ENCODE measurements at regions of chr3 and their contacts with region 1.

Region 1: DNA sequence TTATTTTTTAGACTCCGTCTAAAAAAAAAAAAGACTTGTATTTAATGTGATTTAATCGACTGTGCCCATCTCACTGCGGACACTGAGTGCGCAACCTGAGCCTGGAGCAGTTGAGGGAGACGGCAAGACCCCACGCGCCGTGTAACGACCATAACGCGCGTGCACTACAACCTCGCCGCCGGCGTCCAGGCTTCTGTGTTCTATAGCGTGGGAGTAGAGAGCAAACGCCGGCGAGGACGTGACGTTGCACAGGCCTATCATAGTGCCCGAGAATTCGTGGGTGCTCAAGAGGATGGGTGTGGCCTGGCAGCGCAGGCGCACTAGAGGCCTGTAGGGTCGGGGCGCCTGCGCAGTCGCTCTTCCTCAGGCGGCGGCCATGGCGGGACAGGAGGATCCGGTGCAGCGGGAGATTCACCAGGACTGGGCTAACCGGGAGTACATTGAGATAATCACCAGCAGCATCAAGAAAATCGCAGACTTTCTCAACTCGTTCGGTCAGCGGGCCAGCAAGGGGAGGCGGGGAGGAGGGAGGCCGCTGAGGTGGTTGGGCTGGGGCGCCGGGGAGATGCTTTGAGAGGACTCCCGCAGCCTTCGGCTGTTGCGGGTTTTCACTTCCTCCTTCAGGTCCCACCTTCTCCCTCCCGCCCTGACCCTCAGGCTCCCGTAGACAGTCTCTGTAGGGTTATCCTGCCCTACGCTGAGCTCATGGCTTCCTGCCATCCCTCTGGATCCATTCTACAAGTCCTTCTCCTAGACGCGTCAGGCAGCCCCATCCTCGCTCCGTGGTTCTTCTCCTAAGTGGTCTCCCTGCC is at the start of gene BRK1:
- DNase-seq: peak; percentile 98
- ATAC-seq: peak; percentile 98
- H3K4me3 Mint-ChIP-seq: peak within 1 kb of the TSS; percentile 96
- H3K27ac Mint-ChIP-seq: peak within 1 kb of the TSS; percentile 92
- H3K4me1 Mint-ChIP-seq: peaks cover 35% of the 10 kb centered on the region
- H3K27me3 Mint-ChIP-seq: no peaks in the 10 kb centered on the region
- total RNA-seq, gene BRK1: 83.4 to 86.6 TPM

Region 2: GRCh38 chr3:9649791-9650521 is 465.6 kb before region 1 on chr3:
- CTCF ChIA-PET with region 1: no interaction called
- POLR2A ChIA-PET with region 1: no interaction called
- intact Hi-C with region 1: loop called in 1 of 2 experiments (anchors 1 kb)
- DNase-seq: no peak
- ATAC-seq: peak; percentile 1
- H3K4me3 Mint-ChIP-seq: peak overlapping the region; percentile 95
- H3K27ac Mint-ChIP-seq: peak overlapping the region; percentile 92
- H3K4me1 Mint-ChIP-seq: peaks cover 24% of the 10 kb centered on the region
- H3K27me3 Mint-ChIP-seq: no peaks in the 10 kb centered on the region

Region 3: GRCh38 chr3:9837701-9838582 is 277.6 kb before region 1 on chr3:
- CTCF ChIA-PET with region 1: no interaction called
- POLR2A ChIA-PET with region 1: no interaction called
- intact Hi-C with region 1: no loop called
- DNase-seq: no peak
- ATAC-seq: no peak
- H3K4me3 Mint-ChIP-seq: no peak overlapping the region
- H3K27ac Mint-ChIP-seq: no peak overlapping the region
- H3K4me1 Mint-ChIP-seq: peaks cover 13% of the 10 kb centered on the region
- H3K27me3 Mint-ChIP-seq: no peaks in the 10 kb centered on the region

Region 4: DNA sequence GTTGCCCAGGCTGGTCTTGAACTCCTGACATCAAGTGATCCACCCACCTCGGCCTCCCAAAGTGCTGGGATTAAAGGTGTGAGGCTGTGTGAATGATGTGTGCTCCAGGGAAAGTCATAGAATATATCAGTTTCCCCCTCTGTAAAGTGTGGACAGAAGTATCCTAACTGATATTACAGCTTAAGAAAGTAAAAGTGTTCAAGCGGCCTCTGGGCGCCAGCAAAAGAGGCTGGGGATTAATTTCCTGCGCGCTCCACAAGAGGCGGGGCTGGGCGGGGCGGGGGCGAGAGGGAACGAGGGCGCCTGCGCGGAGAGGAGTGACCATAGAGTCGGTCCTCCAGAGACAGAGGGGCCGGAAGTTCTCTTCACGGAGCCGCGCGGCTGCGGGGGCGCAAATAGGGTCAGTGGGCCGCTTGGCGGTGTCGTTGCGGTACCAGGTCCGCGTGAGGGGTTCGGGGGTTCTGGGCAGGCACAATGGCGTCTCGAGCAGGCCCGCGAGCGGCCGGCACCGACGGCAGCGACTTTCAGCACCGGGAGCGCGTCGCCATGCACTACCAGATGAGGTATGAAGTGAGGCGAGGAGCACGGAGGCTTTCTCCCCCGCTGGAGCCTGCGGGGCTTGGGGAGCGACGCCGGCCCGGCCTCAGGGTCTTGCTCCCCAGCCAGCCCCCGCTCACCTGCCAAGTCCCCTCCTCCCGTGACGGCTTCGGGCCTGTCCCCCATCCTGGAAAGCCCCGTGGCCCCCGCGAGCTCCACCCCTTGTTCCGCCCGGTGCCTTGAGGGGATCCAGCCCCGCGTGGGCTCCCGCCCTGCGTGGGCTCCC is 225.1 kb before region 1 on chr3 and contains the start of gene JAGN1:
- CTCF ChIA-PET with region 1: no interaction called
- POLR2A ChIA-PET with region 1: no interaction called
- intact Hi-C with region 1: loop called (anchors 1 kb)
- DNase-seq: peak; percentile 96
- ATAC-seq: peak; percentile 82
- H3K4me3 Mint-ChIP-seq: peak within 1 kb of the TSS; percentile 96
- H3K27ac Mint-ChIP-seq: peak within 1 kb of the TSS; percentile 98
- H3K4me1 Mint-ChIP-seq: peaks cover 34% of the 10 kb centered on the region
- H3K27me3 Mint-ChIP-seq: no peaks in the 10 kb centered on the region
- total RNA-seq, gene JAGN1: 27.1 to 33.0 TPM

Region 5: DNA sequence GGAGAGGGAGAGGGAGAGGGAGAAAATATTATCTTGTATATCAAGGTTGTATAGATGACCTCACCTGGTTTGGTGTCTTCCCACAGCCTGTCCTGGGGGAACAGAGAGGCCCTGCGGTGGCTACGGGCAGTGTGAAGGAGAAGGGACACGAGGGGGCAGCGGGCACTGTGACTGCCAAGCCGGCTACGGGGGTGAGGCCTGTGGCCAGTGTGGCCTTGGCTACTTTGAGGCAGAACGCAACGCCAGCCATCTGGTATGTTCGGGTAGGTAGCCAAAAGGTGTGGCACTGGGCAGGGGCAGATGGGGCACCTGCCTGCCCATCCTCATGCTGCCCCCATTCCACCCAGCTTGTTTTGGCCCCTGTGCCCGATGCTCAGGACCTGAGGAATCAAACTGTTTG is 174.8 kb before region 1 on chr3:
- CTCF ChIA-PET with region 1: no interaction called
- POLR2A ChIA-PET with region 1: no interaction called
- intact Hi-C with region 1: no loop called
- DNase-seq: no peak
- ATAC-seq: no peak
- H3K4me3 Mint-ChIP-seq: no peak overlapping the region
- H3K27ac Mint-ChIP-seq: no peak overlapping the region
- H3K4me1 Mint-ChIP-seq: peaks cover 2% of the 10 kb centered on the region
- H3K27me3 Mint-ChIP-seq: no peaks in the 10 kb centered on the region

Region 6: GRCh38 chr3:10142707-10143566 is 27.4 kb after region 1 on chr3:
- CTCF ChIA-PET with region 1: interaction called, 3 read pairs
- POLR2A ChIA-PET with region 1: no interaction called
- intact Hi-C with region 1: loop called in 1 of 2 experiments (anchors 1 kb)
- DNase-seq: peak; percentile 57
- ATAC-seq: peak; percentile 15
- H3K4me3 Mint-ChIP-seq: peak overlapping the region; percentile 97
- H3K27ac Mint-ChIP-seq: peak overlapping the region; percentile 89
- H3K4me1 Mint-ChIP-seq: peaks cover 28% of the 10 kb centered on the region
- H3K27me3 Mint-ChIP-seq: no peaks in the 10 kb centered on the region

Region 7: DNA sequence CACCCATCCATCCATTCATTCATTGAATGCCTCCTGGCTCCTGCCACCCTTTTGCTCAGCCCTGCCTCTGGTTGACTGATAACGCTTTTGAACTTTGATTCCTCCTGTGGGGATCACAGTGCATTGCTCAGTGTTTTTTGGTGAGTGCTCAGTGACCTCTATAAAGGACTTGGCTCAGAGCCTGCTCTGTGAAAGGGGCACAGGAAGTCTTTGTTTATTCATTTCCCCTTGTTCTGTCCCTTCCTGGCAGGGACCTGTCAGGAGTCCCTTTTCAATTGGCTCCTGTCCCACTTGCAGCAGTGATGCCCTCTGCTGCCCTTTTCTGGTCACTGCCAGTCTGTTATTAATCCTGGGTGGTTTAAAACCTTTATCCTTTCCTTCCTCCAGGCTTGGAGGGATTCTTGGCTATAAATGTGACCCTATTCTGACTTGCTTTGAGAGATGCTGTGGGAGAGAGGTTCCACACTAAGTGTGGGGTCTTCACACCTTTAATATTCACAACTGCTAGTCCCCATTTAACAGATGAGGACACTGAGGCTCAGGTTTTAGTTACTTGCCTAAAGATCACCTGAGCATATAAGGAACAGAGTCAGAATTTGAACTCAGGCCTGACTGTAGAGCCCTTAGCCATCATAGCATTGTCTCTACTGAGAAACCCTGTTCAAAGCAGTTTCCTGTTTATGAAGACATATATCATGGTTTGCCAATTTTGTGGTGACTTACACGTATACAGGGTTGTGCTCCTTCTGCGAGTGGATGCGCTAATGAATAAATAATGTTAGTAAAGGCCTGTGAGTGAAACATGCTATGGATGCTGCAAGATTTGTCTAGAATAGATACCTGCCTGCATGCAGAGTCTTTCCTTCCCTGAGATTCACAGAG is 109.5 kb after region 1 on chr3:
- CTCF ChIA-PET with region 1: no interaction called
- POLR2A ChIA-PET with region 1: interaction called, 3 read pairs
- intact Hi-C with region 1: loop called (anchors 1 to 5 kb)
- DNase-seq: peak; percentile 83
- ATAC-seq: peak; percentile 72
- H3K4me3 Mint-ChIP-seq: no peak overlapping the region
- H3K27ac Mint-ChIP-seq: peak overlapping the region; percentile 83
- H3K4me1 Mint-ChIP-seq: peaks cover 69% of the 10 kb centered on the region
- H3K27me3 Mint-ChIP-seq: no peaks in the 10 kb centered on the region

Region 8: DNA sequence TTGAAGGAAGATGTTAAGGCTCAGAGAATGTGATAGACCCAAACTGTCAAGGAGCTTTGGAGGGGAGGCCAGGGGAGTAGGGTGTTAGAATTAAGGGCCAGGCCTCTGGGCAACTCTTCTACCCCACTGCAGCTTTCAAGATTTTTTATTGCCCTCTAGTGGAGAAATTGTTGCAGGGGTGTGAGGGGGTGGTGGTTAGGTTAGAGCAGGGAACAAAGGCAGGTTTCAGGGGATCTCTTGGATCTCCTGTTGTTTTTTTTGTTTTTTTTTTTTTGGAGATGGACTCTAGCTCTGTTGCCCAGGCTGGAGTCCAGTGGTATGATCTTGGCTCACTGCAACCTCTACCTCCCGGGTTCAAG is 206.8 kb after region 1 on chr3:
- CTCF ChIA-PET with region 1: no interaction called
- POLR2A ChIA-PET with region 1: no interaction called
- intact Hi-C with region 1: loop called (anchors 1 to 2 kb)
- DNase-seq: peak; percentile 37
- ATAC-seq: peak; percentile 22
- H3K4me3 Mint-ChIP-seq: no peak overlapping the region
- H3K27ac Mint-ChIP-seq: peak overlapping the region; percentile 3
- H3K4me1 Mint-ChIP-seq: peaks cover 23% of the 10 kb centered on the region
- H3K27me3 Mint-ChIP-seq: peaks cover 4% of the 10 kb centered on the region